ENCODE measurements at regions of chr17 and their contacts with region 1.

Region 1: DNA sequence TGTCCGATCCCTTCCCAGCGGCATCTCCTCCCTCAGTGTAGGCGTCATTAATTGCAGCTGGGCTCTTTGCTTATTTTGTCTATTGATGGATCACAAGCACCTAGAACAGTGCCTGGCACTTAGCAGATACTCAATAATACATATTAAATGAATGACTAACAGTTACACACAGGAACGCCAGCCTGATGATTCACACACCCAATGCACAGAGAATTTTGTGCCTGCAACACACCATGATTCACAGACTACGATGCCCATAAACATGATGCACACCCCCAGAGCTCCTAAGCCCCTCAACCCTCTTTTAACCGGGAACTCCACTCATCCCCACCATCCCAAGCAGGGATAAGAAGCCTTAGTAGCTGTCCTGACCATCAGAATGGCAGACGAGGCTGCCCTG is 66.6 kb upstream of the TMEM97 start:
- H3K4me3 ChIP-seq: no peak overlapping the region
- H3K27ac ChIP-seq: no peak overlapping the region
- H3K4me1 ChIP-seq: no peaks in the 10 kb centered on the region
- CTCF ChIP-seq: no peak

Region 2: GRCh38 chr17:28227316-28228125 is 24.9 kb before region 1 on chr17:
- CTCF ChIA-PET with region 1: interaction called, 14 read pairs
- POLR2A ChIA-PET with region 1: interaction called, 3 read pairs
- H3K4me3 ChIP-seq: peak overlapping the region; percentile 49
- H3K27ac ChIP-seq: peak overlapping the region; percentile 71
- H3K4me1 ChIP-seq: peaks cover 3% of the 10 kb centered on the region; the same call in 1 of the 2 replicates
- CTCF ChIP-seq: peak; percentile 63

Region 3: DNA sequence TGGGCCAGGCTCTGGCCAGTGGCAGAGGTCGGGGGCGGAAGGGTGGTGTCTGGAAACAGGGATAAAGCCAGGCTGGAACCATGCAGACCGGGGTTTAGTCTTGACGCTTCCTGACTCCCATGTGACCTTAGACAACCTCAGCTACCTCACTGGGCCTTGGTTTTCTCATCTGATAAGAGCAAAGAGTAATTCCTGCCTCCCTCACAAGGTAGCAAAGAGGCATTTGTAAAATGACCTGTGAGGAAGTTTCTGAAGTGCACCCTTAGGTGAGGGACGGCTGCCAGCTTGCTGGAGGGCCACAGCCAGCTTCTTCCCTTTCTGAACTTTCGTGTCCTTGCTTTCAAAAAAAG is 11.5 kb before region 1 on chr17:
- CTCF ChIA-PET with region 1: interaction called, 18 read pairs
- POLR2A ChIA-PET with region 1: no interaction called
- H3K4me3 ChIP-seq: no peak overlapping the region
- H3K27ac ChIP-seq: no peak overlapping the region
- H3K4me1 ChIP-seq: no peaks in the 10 kb centered on the region
- CTCF ChIP-seq: no peak

Region 4: GRCh38 chr17:28267720-28268609 is 15.5 kb after region 1 on chr17:
- CTCF ChIA-PET with region 1: interaction called, 14 read pairs
- POLR2A ChIA-PET with region 1: no interaction called
- H3K4me3 ChIP-seq: no peak overlapping the region
- H3K27ac ChIP-seq: no peak overlapping the region
- H3K4me1 ChIP-seq: 0 out of 2 replicates have a peak, but pooled peaks cover 3% of the 10 kb centered on the region
- CTCF ChIP-seq: no peak